Sigmoid colon (tissue), 7 donors: ENCODE measurements at regions of chrX and their contacts with region 1.

Region 1: DNA sequence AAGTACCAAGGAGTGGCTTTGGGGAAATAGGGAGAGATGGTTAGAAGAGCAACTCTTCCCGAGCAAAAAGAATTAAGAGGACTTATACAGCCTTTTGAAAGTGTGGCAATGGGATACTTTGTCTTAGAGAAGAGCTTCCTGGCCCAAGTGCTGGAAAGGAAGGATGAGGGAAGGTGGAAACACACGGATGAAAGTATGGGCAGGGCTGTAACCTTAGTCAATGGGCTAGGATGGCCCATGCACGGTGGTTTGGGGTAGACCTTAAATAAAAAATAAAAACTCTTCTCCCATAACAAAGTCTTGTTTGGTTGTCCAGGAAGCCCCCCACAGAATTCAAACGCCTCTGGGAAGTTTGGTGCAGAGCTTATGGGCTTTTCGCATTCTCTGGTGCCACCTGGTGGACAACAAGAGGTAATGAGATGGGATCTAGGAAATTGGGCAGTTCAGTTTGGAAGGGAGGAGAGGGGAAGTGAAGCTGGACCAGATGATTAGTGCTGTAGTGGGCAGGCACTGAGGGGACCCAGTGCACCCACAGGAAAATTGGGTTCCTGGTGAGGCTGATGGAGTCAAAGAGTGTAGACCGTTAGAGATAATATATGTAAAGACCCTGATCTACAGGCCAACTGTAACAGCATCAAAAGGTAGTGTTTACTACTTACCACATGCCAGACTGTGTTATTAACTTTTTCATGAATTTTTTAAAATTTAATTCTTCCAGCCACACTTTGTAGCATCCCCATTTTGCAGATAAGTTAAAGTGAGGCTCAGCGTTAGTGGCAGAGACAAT is 13.8 kb upstream of the ENOX2 start:
- DNase-seq: no peak
- H3K4me3 ChIP-seq: no peak overlapping the region
- H3K27ac ChIP-seq: no peak overlapping the region
- H3K4me1 ChIP-seq: no peaks in the 10 kb centered on the region
- H3K27me3 ChIP-seq: no peaks in the 10 kb centered on the region
- CTCF ChIP-seq: peak; percentile 35 to 60 (median 56)
- EP300 ChIP-seq: no peak
- POLR2A ChIP-seq: no peak

Region 2: GRCh38 chrX:130539721-130540321 is 377.0 kb before region 1 on chrX:
- intact Hi-C with region 1: loop called (anchors 2 kb)
- DNase-seq: no peak
- H3K4me3 ChIP-seq: no peak overlapping the region
- H3K27ac ChIP-seq: no peak overlapping the region
- H3K4me1 ChIP-seq: no peaks in the 10 kb centered on the region
- H3K27me3 ChIP-seq: no peaks in the 10 kb centered on the region
- CTCF ChIP-seq: peak in 2 of 4 experiments; percentile 30 to 52
- EP300 ChIP-seq: no peak
- POLR2A ChIP-seq: no peak

Region 3: DNA sequence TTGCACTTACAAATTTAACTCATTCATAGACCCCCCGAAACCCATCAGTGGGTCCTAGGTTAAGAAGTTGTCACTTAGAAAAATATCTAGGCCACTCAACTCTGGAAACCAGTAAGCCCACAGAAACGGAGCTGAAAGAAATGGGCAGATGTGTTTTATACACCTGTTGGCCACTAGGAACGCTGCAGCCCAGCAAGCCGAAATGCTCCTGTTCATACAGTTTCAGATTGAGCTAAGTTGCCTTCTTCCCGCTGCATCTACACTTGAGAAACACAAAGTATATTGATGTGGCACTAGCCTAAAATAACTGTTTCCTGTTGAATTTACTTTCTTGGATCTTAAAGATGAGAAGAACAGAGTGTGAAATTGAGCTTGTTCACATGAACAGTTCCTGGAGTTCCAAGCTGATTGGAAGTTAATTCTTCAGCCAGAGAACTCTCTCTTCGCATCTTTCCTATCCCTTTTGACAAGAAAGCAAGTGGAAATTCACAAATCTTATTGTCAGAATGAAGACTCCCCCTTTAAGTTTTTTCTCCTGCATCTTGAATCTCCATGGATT is 340.9 kb before region 1 on chrX:
- intact Hi-C with region 1: loop called (anchors 2 kb)
- DNase-seq: no peak
- H3K4me3 ChIP-seq: no peak overlapping the region
- H3K27ac ChIP-seq: no peak overlapping the region
- H3K4me1 ChIP-seq: no peaks in the 10 kb centered on the region
- H3K27me3 ChIP-seq: no peaks in the 10 kb centered on the region
- CTCF ChIP-seq: peak; percentile 24 to 57 (median 36)
- EP300 ChIP-seq: no peak
- POLR2A ChIP-seq: no peak